GM13976 (cell line): ENCODE measurements at regions of chr18 and their contacts with region 1.

Region 1: GRCh38 chr18:11310476-11311086 is 161.2 kb upstream of the PIEZO2 start:
- DNase-seq: peak; percentile 52
- CTCF ChIP-seq: peak; percentile 81

Region 2: GRCh38 chr18:11529081-11529480 is 218.5 kb after region 1 on chr18:
- in situ Hi-C with region 1: loop called (anchors 10 kb)
- DNase-seq: no peak
- CTCF ChIP-seq: no peak